ENCODE measurements at regions of chr2 and their contacts with region 1.

Region 1: GRCh38 chr2:111986116-111986900 is 68.8 kb upstream of the TMEM87B start:
- DNase-seq: no peak
- H3K4me3 ChIP-seq: no peak overlapping the region
- H3K4me3 Mint-ChIP-seq: no peak overlapping the region
- H3K27ac ChIP-seq: no peak overlapping the region
- H3K27ac Mint-ChIP-seq: no peak overlapping the region
- H3K4me1 ChIP-seq: no peaks in the 10 kb centered on the region
- H3K4me1 Mint-ChIP-seq: no peaks in the 10 kb centered on the region
- H3K27me3 ChIP-seq: no peaks in the 10 kb centered on the region
- H3K27me3 Mint-ChIP-seq: peaks cover 0 to 2% (median 2%) of the 10 kb centered on the region in 3 donors
- CTCF ChIP-seq: no peak

Region 2: DNA sequence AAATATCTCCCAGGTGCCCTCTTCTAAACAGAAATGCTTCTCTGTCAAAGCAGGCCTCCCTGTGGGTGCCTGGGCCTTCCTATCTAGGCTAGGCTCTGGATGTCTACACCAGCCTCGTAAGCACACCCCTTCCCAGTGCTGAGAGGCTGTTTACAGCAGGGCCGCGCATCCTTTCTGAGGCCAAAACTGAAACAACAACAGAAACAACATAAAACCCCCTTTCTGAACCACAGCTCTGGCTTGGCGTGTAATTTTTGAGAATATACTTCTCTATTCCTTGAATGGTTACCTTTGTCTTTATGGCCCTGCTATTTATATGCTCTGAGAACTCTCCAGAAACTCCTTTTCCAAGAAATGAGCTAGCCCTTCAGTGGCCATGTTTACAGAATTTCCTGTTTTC is 747.2 kb before region 1 on chr2:
- intact Hi-C with region 1: no loop called
- DNase-seq: no peak
- H3K4me3 ChIP-seq: no peak overlapping the region
- H3K4me3 Mint-ChIP-seq: no peak overlapping the region
- H3K27ac ChIP-seq: no peak overlapping the region
- H3K27ac Mint-ChIP-seq: peak overlapping the region in 2 of 7 donors; percentile 23 to 72
- H3K4me1 ChIP-seq: peaks cover 7 to 10% of the 10 kb centered on the region in 2 donors
- H3K4me1 Mint-ChIP-seq: peaks cover 12% of the 10 kb centered on the region
- H3K27me3 ChIP-seq: no peaks in the 10 kb centered on the region
- H3K27me3 Mint-ChIP-seq: peaks cover 0 to 2% (median 0%) of the 10 kb centered on the region in 3 donors
- CTCF ChIP-seq: no peak

Region 3: DNA sequence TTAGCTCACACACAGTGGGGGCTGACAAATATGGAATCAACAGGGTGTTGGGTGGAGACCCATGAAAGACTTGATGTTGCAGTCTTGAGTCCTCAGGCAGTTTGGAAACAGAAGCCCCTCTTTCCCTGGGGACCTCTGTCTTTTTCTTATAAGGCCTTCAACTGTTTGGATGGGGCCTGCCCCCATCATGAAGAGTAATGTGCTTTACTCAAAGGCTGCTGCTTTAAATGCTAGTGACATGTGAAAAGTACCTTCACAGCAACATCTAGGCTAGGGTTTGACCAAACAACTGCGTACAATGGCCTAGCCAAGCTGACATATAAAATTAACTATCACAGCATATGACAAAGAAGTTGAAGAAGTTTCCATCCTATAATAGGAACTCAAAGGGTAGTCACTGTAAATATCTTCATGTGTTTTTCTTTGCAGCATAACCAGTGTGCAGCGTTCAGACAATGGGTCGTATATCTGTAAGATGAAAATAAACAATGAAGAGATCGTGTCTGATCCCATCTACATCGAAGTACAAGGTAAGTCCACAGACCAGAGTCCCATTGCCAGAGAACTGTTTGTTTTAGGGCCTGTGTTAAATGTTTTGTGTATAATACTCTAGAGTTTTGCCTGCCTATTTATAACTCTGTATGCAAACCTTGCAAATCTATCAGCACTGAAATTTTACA is 41.6 kb before region 1 on chr2:
- intact Hi-C with region 1: no loop called
- DNase-seq: no peak
- H3K4me3 ChIP-seq: no peak overlapping the region
- H3K4me3 Mint-ChIP-seq: no peak overlapping the region
- H3K27ac ChIP-seq: no peak overlapping the region
- H3K27ac Mint-ChIP-seq: no peak overlapping the region
- H3K4me1 ChIP-seq: no peaks in the 10 kb centered on the region
- H3K4me1 Mint-ChIP-seq: no peaks in the 10 kb centered on the region
- H3K27me3 ChIP-seq: no peaks in the 10 kb centered on the region
- H3K27me3 Mint-ChIP-seq: peaks cover 0 to 4% (median 3%) of the 10 kb centered on the region in 3 donors
- CTCF ChIP-seq: no peak

Region 4: GRCh38 chr2:111954602-111955332 is 31.5 kb before region 1 on chr2:
- intact Hi-C with region 1: loop called in 1 of 2 experiments (anchors 5 kb)
- DNase-seq: no peak
- H3K4me3 ChIP-seq: no peak overlapping the region
- H3K4me3 Mint-ChIP-seq: no peak overlapping the region
- H3K27ac ChIP-seq: no peak overlapping the region
- H3K27ac Mint-ChIP-seq: no peak overlapping the region
- H3K4me1 ChIP-seq: no peaks in the 10 kb centered on the region
- H3K4me1 Mint-ChIP-seq: peaks cover 7% of the 10 kb centered on the region
- H3K27me3 ChIP-seq: no peaks in the 10 kb centered on the region
- H3K27me3 Mint-ChIP-seq: peaks cover 0 to 5% (median 2%) of the 10 kb centered on the region in 3 donors
- CTCF ChIP-seq: no peak

Region 5: GRCh38 chr2:112092286-112093041 is 106.2 kb after region 1 on chr2:
- intact Hi-C with region 1: no loop called
- DNase-seq: no peak
- H3K4me3 ChIP-seq: no peak overlapping the region
- H3K4me3 Mint-ChIP-seq: no peak overlapping the region
- H3K27ac ChIP-seq: no peak overlapping the region
- H3K27ac Mint-ChIP-seq: peak overlapping the region in 3 of 7 donors; percentile 6 to 34 (median 21)
- H3K4me1 ChIP-seq: no peaks in the 10 kb centered on the region
- H3K4me1 Mint-ChIP-seq: no peaks in the 10 kb centered on the region
- H3K27me3 ChIP-seq: no peaks in the 10 kb centered on the region
- H3K27me3 Mint-ChIP-seq: no peaks in the 10 kb centered on the region
- CTCF ChIP-seq: no peak

Region 6: GRCh38 chr2:112187805-112188596 is 201.7 kb after region 1 on chr2:
- intact Hi-C with region 1: no loop called
- DNase-seq: no peak
- H3K4me3 ChIP-seq: no peak overlapping the region
- H3K4me3 Mint-ChIP-seq: no peak overlapping the region
- H3K27ac ChIP-seq: no peak overlapping the region
- H3K27ac Mint-ChIP-seq: peak overlapping the region in 1 of 7 donors; percentile 10
- H3K4me1 ChIP-seq: no peaks in the 10 kb centered on the region
- H3K4me1 Mint-ChIP-seq: no peaks in the 10 kb centered on the region
- H3K27me3 ChIP-seq: peaks cover 0 to 4% of the 10 kb centered on the region in 2 donors
- H3K27me3 Mint-ChIP-seq: peaks cover 2 to 8% (median 8%) of the 10 kb centered on the region in 3 donors
- CTCF ChIP-seq: no peak